Common myeloid progenitor, CD34-positive (primary cell): ENCODE measurements at regions of chr17 and their contacts with region 1.

Region 1: GRCh38 chr17:80454557-80455335 is 21.7 kb downstream of the NPTX1 start:
- DNase-seq: peak; percentile 95 to 98 (median 97)
- H3K4me3 ChIP-seq: peak overlapping the region; percentile 46 to 85 (median 78)
- H3K27ac ChIP-seq: peak overlapping the region; percentile 88 to 94
- H3K4me1 ChIP-seq: peaks cover 0 to 42% (median 27%) of the 10 kb centered on the region in 4 experiments
- H3K27me3 ChIP-seq: peaks cover 0 to 8% (median 0%) of the 10 kb centered on the region in 5 experiments

Region 2: DNA sequence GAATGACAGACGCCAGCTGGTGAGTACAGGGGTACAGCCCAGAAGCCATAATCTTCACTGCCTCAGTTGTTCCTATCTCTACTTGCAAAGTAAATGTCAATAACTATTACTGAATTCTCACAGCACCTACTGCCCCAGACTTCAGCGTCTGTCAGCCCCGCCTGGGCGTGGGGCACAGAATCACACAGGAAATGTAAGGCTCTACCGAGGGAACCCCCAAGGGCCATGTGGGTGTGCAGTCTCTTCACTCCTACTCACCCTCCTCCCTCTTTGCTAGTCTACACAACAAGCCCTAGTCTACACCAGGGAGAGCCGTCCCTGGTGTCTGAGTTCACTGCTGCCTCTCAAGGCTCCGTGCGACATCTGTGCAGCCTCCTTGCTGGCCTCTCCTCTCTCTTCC is 17.2 kb after region 1 on chr17:
- CTCF ChIA-PET with region 1: interaction called, 10 read pairs
- POLR2A ChIA-PET with region 1: no interaction called
- DNase-seq: no peak
- H3K4me3 ChIP-seq: no peak overlapping the region
- H3K27ac ChIP-seq: no peak overlapping the region
- H3K4me1 ChIP-seq: peaks cover 0 to 26% (median 24%) of the 10 kb centered on the region in 4 experiments
- H3K27me3 ChIP-seq: peaks cover 0 to 100% (median 47%) of the 10 kb centered on the region in 5 experiments